B cell (primary cell): ENCODE measurements at regions of chr2 and their contacts with region 1.

Region 1: DNA sequence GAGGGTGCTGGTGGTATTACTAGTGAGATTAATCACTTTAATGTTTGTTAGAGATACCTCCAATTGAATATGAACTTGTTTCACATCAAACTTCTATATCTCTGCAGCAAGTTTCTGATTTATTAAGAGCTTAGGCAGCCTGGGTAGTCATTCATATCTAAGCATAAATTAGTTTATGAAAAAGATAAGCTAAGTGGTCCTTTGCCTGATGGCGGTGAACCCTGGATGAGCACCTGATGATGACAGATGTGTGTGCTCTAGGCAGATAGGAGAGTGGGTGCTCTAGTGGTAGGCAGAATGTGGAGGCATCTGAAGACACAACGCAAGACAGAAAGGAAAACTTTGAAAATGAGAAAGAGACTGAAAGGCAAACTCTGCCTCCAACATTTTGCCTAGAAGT is 5.0 kb downstream of the FKBP7 start:
- DNase-seq: no peak
- ATAC-seq: no peak
- H3K4me3 ChIP-seq: no peak overlapping the region
- H3K4me3 Mint-ChIP-seq: no peak overlapping the region
- H3K27ac ChIP-seq: no peak overlapping the region
- H3K27ac Mint-ChIP-seq: no peak overlapping the region
- H3K4me1 ChIP-seq: peaks cover 4% of the 10 kb centered on the region in 2 donors
- H3K4me1 Mint-ChIP-seq: peaks cover 6% of the 10 kb centered on the region
- H3K27me3 ChIP-seq: no peaks in the 10 kb centered on the region
- H3K27me3 Mint-ChIP-seq: no peaks in the 10 kb centered on the region
- CTCF ChIP-seq: no peak

Region 2: GRCh38 chr2:178043266-178043665 is 430.1 kb before region 1 on chr2:
- CTCF ChIA-PET with region 1: no interaction called
- POLR2A ChIA-PET with region 1: no interaction called
- intact Hi-C with region 1: no loop called
- DNase-seq: no peak
- ATAC-seq: no peak
- H3K4me3 ChIP-seq: no peak overlapping the region
- H3K4me3 Mint-ChIP-seq: no peak overlapping the region
- H3K27ac ChIP-seq: no peak overlapping the region
- H3K27ac Mint-ChIP-seq: no peak overlapping the region
- H3K4me1 ChIP-seq: no peaks in the 10 kb centered on the region
- H3K4me1 Mint-ChIP-seq: no peaks in the 10 kb centered on the region
- H3K27me3 ChIP-seq: peaks cover 0 to 4% (median 0%) of the 10 kb centered on the region in 4 experiments
- H3K27me3 Mint-ChIP-seq: peaks cover 10% of the 10 kb centered on the region
- CTCF ChIP-seq: no peak

Region 3: DNA sequence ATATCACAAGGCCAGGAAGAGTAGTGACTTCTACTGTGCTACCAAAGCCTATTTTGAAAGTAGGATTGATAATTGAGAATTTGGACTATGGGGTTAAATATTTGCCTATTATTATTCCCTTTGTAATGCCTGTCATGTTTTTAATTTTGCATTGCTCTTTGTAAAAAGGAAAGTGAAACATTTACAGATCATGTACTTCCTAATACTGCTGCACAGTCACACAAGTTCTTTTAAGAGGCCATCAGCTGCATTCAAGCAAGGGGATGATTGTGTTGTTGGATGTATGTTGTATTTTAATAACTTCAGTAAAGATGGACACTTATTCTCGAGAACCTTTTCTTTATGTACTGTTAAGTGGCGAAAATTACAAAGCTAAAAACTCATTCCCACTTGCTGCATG is 77.0 kb after region 1 on chr2:
- CTCF ChIA-PET with region 1: no interaction called
- POLR2A ChIA-PET with region 1: interaction called, 15 read pairs
- intact Hi-C with region 1: no loop called
- DNase-seq: no peak
- ATAC-seq: no peak
- H3K4me3 ChIP-seq: no peak overlapping the region
- H3K4me3 Mint-ChIP-seq: no peak overlapping the region
- H3K27ac ChIP-seq: no peak overlapping the region
- H3K27ac Mint-ChIP-seq: no peak overlapping the region
- H3K4me1 ChIP-seq: no peaks in the 10 kb centered on the region
- H3K4me1 Mint-ChIP-seq: no peaks in the 10 kb centered on the region
- H3K27me3 ChIP-seq: no peaks in the 10 kb centered on the region
- H3K27me3 Mint-ChIP-seq: no peaks in the 10 kb centered on the region
- CTCF ChIP-seq: no peak

Region 4: GRCh38 chr2:178579006-178579405 is 105.6 kb after region 1 on chr2:
- CTCF ChIA-PET with region 1: no interaction called
- POLR2A ChIA-PET with region 1: no interaction called
- intact Hi-C with region 1: no loop called
- DNase-seq: no peak
- ATAC-seq: no peak
- H3K4me3 ChIP-seq: no peak overlapping the region
- H3K4me3 Mint-ChIP-seq: no peak overlapping the region
- H3K27ac ChIP-seq: no peak overlapping the region
- H3K27ac Mint-ChIP-seq: no peak overlapping the region
- H3K4me1 ChIP-seq: no peaks in the 10 kb centered on the region
- H3K4me1 Mint-ChIP-seq: no peaks in the 10 kb centered on the region
- H3K27me3 ChIP-seq: no peaks in the 10 kb centered on the region
- H3K27me3 Mint-ChIP-seq: no peaks in the 10 kb centered on the region
- CTCF ChIP-seq: no peak